Activated CD8-positive, alpha-beta memory T cell treated with anti-CD3 and anti-CD28 coated beads, Interleukin-2, amount 10 ng/mL, durations not matched to agents 7 days and 5 days (primary cell): ENCODE measurements at regions of chr6 and their contacts with region 1.

Region 1: GRCh38 chr6:165884813-165885765 is 222.0 kb upstream of the PDE10A start:
- DNase-seq: peak; percentile 78
- ATAC-seq: peak; percentile 96
- H3K4me3 Mint-ChIP-seq: no peak overlapping the region
- H3K27ac Mint-ChIP-seq: no peak overlapping the region
- H3K4me1 Mint-ChIP-seq: peaks cover 7% of the 10 kb centered on the region
- H3K27me3 Mint-ChIP-seq: peaks cover 6% of the 10 kb centered on the region

Region 2: DNA sequence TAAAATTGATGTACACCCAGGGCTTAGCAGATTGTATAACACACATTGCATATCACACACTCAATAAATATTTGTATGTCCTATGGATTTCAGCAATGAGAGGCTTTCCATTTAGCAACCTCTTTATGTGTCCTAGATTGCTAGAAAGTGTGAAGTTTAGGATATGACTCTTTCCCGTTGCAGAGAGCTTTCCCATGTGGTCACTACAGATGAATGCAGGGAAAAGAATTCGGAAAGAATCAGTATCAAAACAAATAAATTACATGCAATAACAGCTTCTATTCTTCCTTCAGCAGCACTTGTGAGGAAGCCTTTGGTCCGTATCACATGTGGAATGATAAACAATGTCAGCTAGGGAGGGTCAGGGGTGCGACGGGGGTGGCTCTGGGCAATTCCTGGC is 1445.8 kb before region 1 on chr6:
- CTCF ChIA-PET with region 1: no interaction called
- DNase-seq: no peak
- ATAC-seq: no peak
- H3K4me3 Mint-ChIP-seq: no peak overlapping the region
- H3K27ac Mint-ChIP-seq: no peak overlapping the region
- H3K4me1 Mint-ChIP-seq: no peaks in the 10 kb centered on the region
- H3K27me3 Mint-ChIP-seq: no peaks in the 10 kb centered on the region

Region 3: GRCh38 chr6:165858586-165858985 is 26.5 kb before region 1 on chr6:
- CTCF ChIA-PET with region 1: no interaction called
- DNase-seq: no peak
- ATAC-seq: no peak
- H3K4me3 Mint-ChIP-seq: no peak overlapping the region
- H3K27ac Mint-ChIP-seq: no peak overlapping the region
- H3K4me1 Mint-ChIP-seq: no peaks in the 10 kb centered on the region
- H3K27me3 Mint-ChIP-seq: peaks cover 19% of the 10 kb centered on the region

Region 4: GRCh38 chr6:166087246-166087645 is 202.2 kb after region 1 on chr6:
- CTCF ChIA-PET with region 1: no interaction called
- DNase-seq: no peak
- ATAC-seq: no peak
- H3K4me3 Mint-ChIP-seq: no peak overlapping the region
- H3K27ac Mint-ChIP-seq: no peak overlapping the region
- H3K4me1 Mint-ChIP-seq: no peaks in the 10 kb centered on the region
- H3K27me3 Mint-ChIP-seq: no peaks in the 10 kb centered on the region

Region 5: DNA sequence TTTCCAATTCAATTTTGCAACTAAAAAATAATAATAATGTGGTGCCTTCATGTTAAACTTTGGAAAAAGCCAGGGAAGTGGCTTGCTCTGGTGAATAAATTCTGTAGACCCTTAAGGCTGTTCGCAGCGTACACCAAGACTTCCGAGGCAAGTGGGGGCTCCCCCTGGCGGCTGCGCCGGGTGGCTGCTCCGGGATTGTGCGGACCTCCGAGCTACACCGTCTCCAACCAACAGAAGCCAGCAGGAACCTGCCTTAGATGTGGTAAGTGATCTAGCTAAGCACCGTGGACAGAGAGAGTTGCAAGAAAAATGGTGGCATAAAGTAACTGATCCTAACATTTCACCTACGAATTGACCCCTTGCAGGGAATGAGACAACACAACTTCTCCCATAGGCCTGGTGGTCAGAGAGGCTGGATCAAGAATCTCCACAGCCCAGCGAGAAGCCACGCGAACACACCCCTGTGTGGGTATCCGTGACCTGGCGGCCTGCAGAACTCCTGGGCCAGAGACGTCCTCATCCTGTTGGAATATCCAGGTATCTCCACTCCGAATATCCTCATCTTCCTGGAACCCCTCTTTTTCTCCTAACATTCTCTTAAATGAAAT is 212.9 kb after region 1 on chr6:
- CTCF ChIA-PET with region 1: interaction called, 14 read pairs
- DNase-seq: peak; percentile 59
- ATAC-seq: peak; percentile 64
- H3K4me3 Mint-ChIP-seq: no peak overlapping the region
- H3K27ac Mint-ChIP-seq: no peak overlapping the region
- H3K4me1 Mint-ChIP-seq: no peaks in the 10 kb centered on the region
- H3K27me3 Mint-ChIP-seq: peaks cover 24% of the 10 kb centered on the region

Region 6: DNA sequence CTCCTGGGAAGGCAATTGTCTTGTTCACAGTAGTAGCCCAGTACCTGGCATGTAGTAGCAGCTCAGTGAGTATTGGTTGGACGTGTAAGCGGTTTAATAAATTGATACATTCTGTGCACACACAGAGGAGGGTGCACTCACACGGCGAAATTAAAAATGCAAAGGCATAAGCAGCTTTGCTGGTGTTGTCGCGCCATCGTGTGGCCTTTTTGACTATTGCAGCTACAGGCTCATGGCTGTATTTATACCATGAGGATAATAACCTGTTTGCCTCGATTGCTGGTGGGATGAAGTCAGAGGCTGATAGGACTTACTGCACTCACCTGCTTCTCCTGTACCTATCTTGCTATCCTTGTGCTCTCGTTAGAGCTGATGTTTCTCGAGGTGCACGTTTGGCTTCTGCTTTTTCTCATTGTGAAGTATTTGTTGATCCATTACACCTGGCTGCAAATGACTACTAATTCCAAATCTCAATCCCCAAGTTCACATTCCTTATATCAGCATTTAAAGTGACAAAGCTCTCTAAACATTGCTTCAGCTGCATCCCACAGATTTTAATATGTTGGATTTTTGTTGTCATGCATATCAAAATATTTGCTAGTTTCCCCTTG is 221.1 kb after region 1 on chr6:
- CTCF ChIA-PET with region 1: interaction called, 20 read pairs
- DNase-seq: peak; percentile 76
- ATAC-seq: peak; percentile 42
- H3K4me3 Mint-ChIP-seq: no peak overlapping the region
- H3K27ac Mint-ChIP-seq: no peak overlapping the region
- H3K4me1 Mint-ChIP-seq: no peaks in the 10 kb centered on the region
- H3K27me3 Mint-ChIP-seq: peaks cover 29% of the 10 kb centered on the region